WTC11 (cell line): ENCODE measurements at regions of chr12 and their contacts with region 1.

Region 1: GRCh38 chr12:50111693-50112455 is at the start of gene COX14:
- DNase-seq: peak; percentile 99
- ATAC-seq: peak; percentile 88
- H3K4me3 Mint-ChIP-seq: peak within 1 kb of the TSS; percentile 99
- H3K27ac Mint-ChIP-seq: peak within 1 kb of the TSS; percentile 99
- H3K4me1 Mint-ChIP-seq: peaks cover 19% of the 10 kb centered on the region
- H3K27me3 Mint-ChIP-seq: no peaks in the 10 kb centered on the region
- CTCF ChIP-seq: peak; percentile 70
- total RNA-seq, gene COX14: 34.0 to 41.4 TPM (median 40.4 TPM) in 3 replicates

Region 2: GRCh38 chr12:49998453-49998852 is 113.4 kb before region 1 on chr12:
- CTCF ChIA-PET with region 1: no interaction called
- POLR2A ChIA-PET with region 1: no interaction called
- DNase-seq: no peak
- ATAC-seq: no peak
- H3K4me3 Mint-ChIP-seq: no peak overlapping the region
- H3K27ac Mint-ChIP-seq: no peak overlapping the region
- H3K4me1 Mint-ChIP-seq: no peaks in the 10 kb centered on the region
- H3K27me3 Mint-ChIP-seq: no peaks in the 10 kb centered on the region
- CTCF ChIP-seq: no peak

Region 3: GRCh38 chr12:50074936-50075807 is 36.7 kb before region 1 on chr12:
- CTCF ChIA-PET with region 1: interaction called, 28 read pairs
- POLR2A ChIA-PET with region 1: no interaction called
- DNase-seq: peak; percentile 93
- ATAC-seq: peak; percentile 93
- H3K4me3 Mint-ChIP-seq: no peak overlapping the region
- H3K27ac Mint-ChIP-seq: peak overlapping the region; percentile 72; the same call in 1 of the 2 replicates
- H3K4me1 Mint-ChIP-seq: peaks cover 18% of the 10 kb centered on the region
- H3K27me3 Mint-ChIP-seq: peaks cover 8% of the 10 kb centered on the region
- CTCF ChIP-seq: peak; percentile 84

Region 4: GRCh38 chr12:50151047-50151687 is 39.3 kb after region 1 on chr12:
- CTCF ChIA-PET with region 1: interaction called, 15 read pairs
- POLR2A ChIA-PET with region 1: no interaction called
- DNase-seq: no peak
- ATAC-seq: no peak
- H3K4me3 Mint-ChIP-seq: no peak overlapping the region
- H3K27ac Mint-ChIP-seq: peak overlapping the region; percentile 19
- H3K4me1 Mint-ChIP-seq: no peaks in the 10 kb centered on the region
- H3K27me3 Mint-ChIP-seq: no peaks in the 10 kb centered on the region
- CTCF ChIP-seq: no peak

Region 5: DNA sequence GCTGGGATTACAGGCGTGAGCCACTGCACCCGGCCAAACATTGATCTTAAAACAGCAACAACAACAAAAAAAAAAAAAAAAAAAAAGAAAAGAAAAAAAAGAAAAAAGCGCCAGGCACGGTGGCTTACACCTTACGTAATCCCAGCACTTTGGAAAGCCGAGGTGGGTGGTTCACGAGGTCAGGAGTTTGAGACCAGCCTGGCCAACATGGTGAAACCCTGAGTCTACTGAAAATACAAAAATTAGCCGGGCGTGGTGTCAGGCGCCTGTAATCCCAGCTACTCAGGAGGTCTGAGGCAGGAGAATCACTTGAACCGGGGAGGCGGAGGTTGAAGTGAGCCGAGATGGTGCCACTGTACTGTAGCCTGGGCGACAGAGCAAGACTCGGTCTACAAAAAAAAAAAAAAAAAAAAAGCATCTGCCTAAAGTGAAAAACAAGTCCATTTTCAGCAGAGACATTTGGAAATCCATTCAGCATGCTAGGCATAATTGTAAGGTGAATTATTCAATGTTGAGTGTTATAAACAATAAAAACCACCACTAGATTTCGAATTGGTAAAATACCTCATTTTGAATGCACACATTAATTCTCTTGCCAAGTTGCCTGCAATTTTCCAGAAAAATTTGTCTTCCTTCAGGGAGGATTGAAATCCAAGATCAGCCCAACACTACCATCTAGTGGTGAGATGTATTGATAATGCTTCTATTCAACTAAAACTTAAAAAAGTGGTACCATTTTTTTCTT is 63.3 kb after region 1 on chr12:
- CTCF ChIA-PET with region 1: interaction called, 25 read pairs
- POLR2A ChIA-PET with region 1: interaction called, 4 read pairs
- DNase-seq: no peak
- ATAC-seq: no peak
- H3K4me3 Mint-ChIP-seq: no peak overlapping the region
- H3K27ac Mint-ChIP-seq: peak overlapping the region; percentile 30; the same call in 1 of the 2 replicates
- H3K4me1 Mint-ChIP-seq: peaks cover 1% of the 10 kb centered on the region
- H3K27me3 Mint-ChIP-seq: no peaks in the 10 kb centered on the region
- CTCF ChIP-seq: peak; percentile 49

Region 6: DNA sequence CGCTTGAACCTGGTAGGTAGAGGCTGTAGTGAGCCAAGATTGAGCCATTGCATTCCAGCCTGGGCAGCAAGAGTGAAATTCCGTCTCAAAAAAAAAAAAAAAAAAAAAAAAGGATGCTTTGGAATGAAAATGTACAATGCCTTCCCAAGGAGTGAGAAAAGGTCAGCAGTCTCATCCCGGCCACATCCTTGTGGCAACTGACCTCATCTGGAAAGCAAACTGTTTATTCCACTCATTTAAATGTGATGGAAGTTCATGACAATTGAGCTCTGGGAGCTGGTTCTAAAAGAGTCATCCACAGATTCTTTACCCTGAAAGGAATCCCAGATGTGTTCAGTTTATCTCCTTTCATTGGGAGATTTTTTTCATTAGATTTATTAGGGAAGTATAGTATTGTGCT is 190.8 kb after region 1 on chr12:
- CTCF ChIA-PET with region 1: interaction called, 12 read pairs
- POLR2A ChIA-PET with region 1: no interaction called
- DNase-seq: no peak
- ATAC-seq: no peak
- H3K4me3 Mint-ChIP-seq: no peak overlapping the region
- H3K27ac Mint-ChIP-seq: no peak overlapping the region
- H3K4me1 Mint-ChIP-seq: no peaks in the 10 kb centered on the region; the same call in 1 of the 2 replicates
- H3K27me3 Mint-ChIP-seq: no peaks in the 10 kb centered on the region
- CTCF ChIP-seq: no peak